ENCODE measurements at regions of chr9 and their contacts with region 1.

Region 1: DNA sequence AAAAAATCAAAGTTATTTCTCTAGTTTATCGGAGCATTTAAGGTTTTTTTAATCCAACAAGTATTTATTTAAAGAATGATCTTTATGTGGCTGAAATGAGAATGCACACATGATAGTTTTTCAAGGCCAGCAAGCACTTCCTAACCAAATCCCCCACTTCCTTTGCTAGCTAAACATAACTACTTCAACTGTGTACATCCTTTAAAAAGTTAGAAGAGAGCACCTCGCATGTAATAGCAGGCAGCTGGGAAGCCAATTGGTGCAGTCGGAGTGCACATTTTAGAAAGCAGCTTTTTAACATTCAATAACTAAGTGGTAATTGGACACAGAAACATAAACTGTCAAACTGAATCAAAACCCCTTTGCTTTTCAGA is 245.7 kb downstream of the BNC2 start:
- DNase-seq: no peak
- H3K4me3 ChIP-seq: no peak overlapping the region
- H3K27ac ChIP-seq: peak overlapping the region in 1 of 2 donors; percentile 19
- H3K4me1 ChIP-seq: no peaks in the 10 kb centered on the region
- H3K27me3 ChIP-seq: no peaks in the 10 kb centered on the region
- CTCF ChIP-seq: no peak
- POLR2A ChIP-seq: no peak

Region 2: GRCh38 chr9:16763946-16764345 is 139.2 kb after region 1 on chr9:
- intact Hi-C with region 1: loop called (anchors 5 kb)
- DNase-seq: no peak
- H3K4me3 ChIP-seq: no peak overlapping the region
- H3K27ac ChIP-seq: no peak overlapping the region
- H3K4me1 ChIP-seq: no peaks in the 10 kb centered on the region
- H3K27me3 ChIP-seq: no peaks in the 10 kb centered on the region
- CTCF ChIP-seq: no peak
- POLR2A ChIP-seq: no peak